Lower lobe of right lung (tissue), 2 donors: ENCODE measurements at regions of chr14 and their contacts with region 1.

Region 1: DNA sequence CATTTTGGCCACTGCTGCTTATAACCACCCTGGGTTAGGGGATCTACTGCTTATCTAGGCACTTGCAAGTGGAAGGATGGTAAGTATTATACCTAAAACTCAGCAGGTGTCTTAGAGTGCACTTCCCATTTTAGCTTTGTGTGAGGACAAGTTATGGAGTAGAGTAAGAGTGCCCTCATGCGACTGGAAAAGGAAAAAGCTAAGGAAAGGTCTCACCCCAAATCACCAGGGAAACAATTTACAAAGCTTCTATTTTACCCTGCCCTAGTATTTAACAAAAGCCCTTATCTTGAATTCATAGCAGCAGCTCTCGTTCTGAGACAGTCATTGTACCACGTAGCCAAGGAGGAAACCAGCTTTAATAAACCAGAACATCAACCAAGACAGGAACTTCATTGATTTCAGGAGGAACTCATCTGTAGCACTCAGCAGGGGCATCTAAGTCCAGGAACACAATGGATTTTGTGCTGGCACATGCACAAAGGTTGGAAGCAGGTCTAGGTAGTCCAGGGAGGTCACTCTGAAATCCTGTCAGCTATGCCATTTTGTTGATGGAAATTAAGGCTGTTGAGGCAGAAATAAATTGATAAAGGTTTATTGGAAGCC is 2.9 kb downstream of the RDH12 start:
- DNase-seq: no peak
- ATAC-seq: peak; percentile 89 to 90
- H3K4me3 ChIP-seq: no peak overlapping the region
- H3K27ac ChIP-seq: no peak overlapping the region
- H3K4me1 ChIP-seq: no peaks in the 10 kb centered on the region
- H3K27me3 ChIP-seq: no peaks in the 10 kb centered on the region
- CTCF ChIP-seq: peak; percentile 69

Region 2: DNA sequence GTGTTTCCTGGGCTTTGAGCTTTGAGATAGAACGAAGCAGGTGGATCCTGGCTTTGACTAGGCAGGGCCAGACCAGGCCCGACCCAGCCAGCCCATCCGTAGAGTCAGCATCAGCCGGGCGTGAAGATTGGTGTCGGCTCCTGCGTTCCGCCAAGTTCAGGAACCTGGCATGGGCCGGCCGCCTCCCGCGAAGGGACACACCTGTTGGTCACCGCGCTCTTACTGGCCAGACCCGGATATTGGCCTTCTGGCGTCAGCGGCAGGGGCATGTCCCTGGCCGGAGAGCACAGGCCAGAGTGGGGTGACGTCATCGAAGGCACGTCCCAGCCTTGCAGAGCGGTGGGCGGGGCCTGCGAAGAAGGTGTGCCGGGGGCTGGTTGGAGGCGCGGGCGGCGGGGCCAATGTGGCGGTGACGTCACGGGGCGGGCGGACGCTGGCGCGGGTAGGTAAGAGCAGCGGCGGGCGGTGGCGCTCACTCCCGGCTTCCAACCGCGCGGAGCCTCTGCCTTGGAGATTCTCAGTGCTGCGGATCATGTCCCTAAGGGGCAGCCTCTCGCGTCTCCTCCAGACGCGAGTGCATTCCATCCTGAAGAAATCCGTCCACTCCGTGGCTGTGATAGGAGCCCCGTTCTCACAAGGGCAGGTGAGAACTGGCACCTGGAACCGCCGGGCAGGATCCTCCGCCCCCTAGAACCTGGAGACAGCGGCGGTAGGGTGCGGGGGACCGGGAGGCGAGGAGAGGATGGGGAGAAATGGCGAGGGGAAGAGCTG is 85.0 kb before region 1 on chr14 and contains the start of gene ARG2:
- intact Hi-C with region 1: loop called (anchors 10 kb)
- DNase-seq: peak; percentile 100
- ATAC-seq: peak; percentile 99
- H3K4me3 ChIP-seq: peak within 1 kb of the TSS; percentile 72
- H3K27ac ChIP-seq: peak within 1 kb of the TSS; percentile 70
- H3K4me1 ChIP-seq: peaks cover 22% of the 10 kb centered on the region
- H3K27me3 ChIP-seq: no peaks in the 10 kb centered on the region
- CTCF ChIP-seq: no peak
- total RNA-seq, gene ARG2: 0.77 TPM

Region 3: GRCh38 chr14:67919259-67920032 is 214.9 kb after region 1 on chr14:
- intact Hi-C with region 1: no loop called
- DNase-seq: no peak
- ATAC-seq: no peak
- H3K4me3 ChIP-seq: no peak overlapping the region
- H3K27ac ChIP-seq: no peak overlapping the region
- H3K4me1 ChIP-seq: no peaks in the 10 kb centered on the region
- H3K27me3 ChIP-seq: no peaks in the 10 kb centered on the region
- CTCF ChIP-seq: no peak